IMR-90 (cell line): ENCODE measurements at regions of chr16 and their contacts with region 1.

Region 1: GRCh38 chr16:86946396-86946795 is 368.0 kb downstream of the FOXL1 start:
- DNase-seq: peak; percentile 34
- ATAC-seq: peak; percentile 86
- H3K4me3 ChIP-seq: no peak overlapping the region
- H3K27ac ChIP-seq: no peak overlapping the region; the same call in 1 of the 2 replicates
- H3K4me1 ChIP-seq: peaks cover 9% of the 10 kb centered on the region
- H3K27me3 ChIP-seq: no peaks in the 10 kb centered on the region
- CTCF ChIP-seq: no peak
- POLR2A ChIP-seq: no peak
- RAD21 ChIP-seq: no peak

Region 2: GRCh38 chr16:86910161-86910769 is 36.1 kb before region 1 on chr16:
- CTCF ChIA-PET with region 1: no interaction called
- POLR2A ChIA-PET with region 1: no interaction called
- dilution Hi-C with region 1: no loop called
- in situ Hi-C with region 1: no loop called
- intact Hi-C with region 1: loop called (anchors 1 kb)
- DNase-seq: no peak
- ATAC-seq: no peak
- H3K4me3 ChIP-seq: no peak overlapping the region
- H3K27ac ChIP-seq: no peak overlapping the region
- H3K4me1 ChIP-seq: no peaks in the 10 kb centered on the region
- H3K27me3 ChIP-seq: no peaks in the 10 kb centered on the region; the same call in 1 of the 2 replicates
- CTCF ChIP-seq: no peak
- POLR2A ChIP-seq: no peak
- RAD21 ChIP-seq: no peak